ENCODE measurements at regions of chr18 and their contacts with region 1.

Region 1: GRCh38 chr18:76349067-76349715 is 145.9 kb downstream of the ZNF516 start:
- DNase-seq: peak in 3 of 5 donors; percentile 35 to 43 (median 41)
- ATAC-seq: peak in 1 of 4 donors; percentile 41
- H3K4me3 ChIP-seq: peak overlapping the region in 1 of 12 donors; percentile 23
- H3K27ac ChIP-seq: no peak overlapping the region
- H3K4me1 ChIP-seq: peaks cover 0 to 11% (median 4%) of the 10 kb centered on the region in 12 donors
- H3K27me3 ChIP-seq: no peaks in the 10 kb centered on the region
- CTCF ChIP-seq: peak; percentile 80 to 93 (median 86)
- POLR2A ChIP-seq: no peak

Region 2: GRCh38 chr18:74623047-74623816 is 1726.0 kb before region 1 on chr18:
- intact Hi-C with region 1: loop called in 1 of 10 experiments (anchors 10 kb)
- DNase-seq: no peak
- ATAC-seq: no peak
- H3K4me3 ChIP-seq: no peak overlapping the region
- H3K27ac ChIP-seq: no peak overlapping the region
- H3K4me1 ChIP-seq: peaks cover 0 to 5% (median 0%) of the 10 kb centered on the region in 12 donors
- H3K27me3 ChIP-seq: no peaks in the 10 kb centered on the region
- CTCF ChIP-seq: peak in 11 of 12 donors; percentile 10 to 48 (median 33)
- POLR2A ChIP-seq: no peak

Region 3: GRCh38 chr18:76246590-76246989 is 102.6 kb before region 1 on chr18:
- intact Hi-C with region 1: no loop called
- DNase-seq: no peak
- ATAC-seq: peak in 3 of 4 donors; percentile 59 to 82 (median 68)
- H3K4me3 ChIP-seq: peak overlapping the region in 1 of 12 donors; percentile 26
- H3K27ac ChIP-seq: peak overlapping the region in 4 of 12 donors; percentile 15 to 57 (median 36)
- H3K4me1 ChIP-seq: peaks cover 0 to 4% (median 0%) of the 10 kb centered on the region in 12 donors
- H3K27me3 ChIP-seq: no peaks in the 10 kb centered on the region
- CTCF ChIP-seq: no peak
- POLR2A ChIP-seq: no peak